A673 (cell line): ENCODE measurements at regions of chr6 and their contacts with region 1.

Region 1: DNA sequence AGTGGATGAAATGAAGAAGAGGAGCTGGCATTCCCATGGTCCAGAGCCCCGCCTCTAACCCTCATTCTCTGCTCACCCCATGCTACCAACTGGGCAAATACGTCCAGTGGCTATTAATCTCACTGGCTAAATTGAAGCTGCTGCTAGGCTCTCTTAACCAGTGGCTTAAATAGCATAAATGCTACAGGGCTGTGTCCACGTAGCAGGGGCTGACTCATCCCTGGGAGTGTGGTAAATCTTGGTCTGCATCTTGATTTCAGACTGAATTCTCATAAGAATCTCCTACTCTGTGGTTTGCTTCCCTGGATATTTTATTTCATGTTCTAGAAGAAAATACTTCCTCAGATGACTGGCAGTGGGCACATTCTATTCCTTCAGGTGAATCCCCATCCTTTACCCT is 193.1 kb upstream of the ARG1 start:
- DNase-seq: no peak
- H3K4me3 ChIP-seq: no peak overlapping the region
- H3K27ac ChIP-seq: peak overlapping the region; percentile 100
- H3K4me1 ChIP-seq: peaks cover 65% of the 10 kb centered on the region
- H3K27me3 ChIP-seq: no peaks in the 10 kb centered on the region
- CTCF ChIP-seq: no peak

Region 2: GRCh38 chr6:130885392-130886192 is 494.4 kb before region 1 on chr6:
- CTCF ChIA-PET with region 1: no interaction called
- POLR2A ChIA-PET with region 1: no interaction called
- intact Hi-C with region 1: loop called (anchors 5 kb)
- DNase-seq: peak; percentile 89
- H3K4me3 ChIP-seq: no peak overlapping the region
- H3K27ac ChIP-seq: no peak overlapping the region
- H3K4me1 ChIP-seq: peaks cover 4% of the 10 kb centered on the region
- H3K27me3 ChIP-seq: no peaks in the 10 kb centered on the region
- CTCF ChIP-seq: peak; percentile 89

Region 3: GRCh38 chr6:131063028-131063763 is 316.8 kb before region 1 on chr6 and contains the start of gene EPB41L2:
- CTCF ChIA-PET with region 1: no interaction called
- POLR2A ChIA-PET with region 1: interaction called, 11 read pairs
- intact Hi-C with region 1: no loop called
- DNase-seq: peak; percentile 96
- H3K4me3 ChIP-seq: peak within 1 kb of the TSS; percentile 93
- H3K27ac ChIP-seq: peak within 1 kb of the TSS; percentile 82
- H3K4me1 ChIP-seq: peaks cover 16% of the 10 kb centered on the region
- H3K27me3 ChIP-seq: no peaks in the 10 kb centered on the region
- CTCF ChIP-seq: no peak
- total RNA-seq, gene EPB41L2: 181 and 232 TPM in 2 replicates

Region 4: GRCh38 chr6:131199568-131200272 is 180.2 kb before region 1 on chr6:
- CTCF ChIA-PET with region 1: interaction called, 3 read pairs
- POLR2A ChIA-PET with region 1: no interaction called
- intact Hi-C with region 1: loop called (anchors 2 kb)
- DNase-seq: peak; percentile 90
- H3K4me3 ChIP-seq: no peak overlapping the region
- H3K27ac ChIP-seq: peak overlapping the region; percentile 55
- H3K4me1 ChIP-seq: peaks cover 26% of the 10 kb centered on the region
- H3K27me3 ChIP-seq: no peaks in the 10 kb centered on the region
- CTCF ChIP-seq: peak; percentile 90

Region 5: DNA sequence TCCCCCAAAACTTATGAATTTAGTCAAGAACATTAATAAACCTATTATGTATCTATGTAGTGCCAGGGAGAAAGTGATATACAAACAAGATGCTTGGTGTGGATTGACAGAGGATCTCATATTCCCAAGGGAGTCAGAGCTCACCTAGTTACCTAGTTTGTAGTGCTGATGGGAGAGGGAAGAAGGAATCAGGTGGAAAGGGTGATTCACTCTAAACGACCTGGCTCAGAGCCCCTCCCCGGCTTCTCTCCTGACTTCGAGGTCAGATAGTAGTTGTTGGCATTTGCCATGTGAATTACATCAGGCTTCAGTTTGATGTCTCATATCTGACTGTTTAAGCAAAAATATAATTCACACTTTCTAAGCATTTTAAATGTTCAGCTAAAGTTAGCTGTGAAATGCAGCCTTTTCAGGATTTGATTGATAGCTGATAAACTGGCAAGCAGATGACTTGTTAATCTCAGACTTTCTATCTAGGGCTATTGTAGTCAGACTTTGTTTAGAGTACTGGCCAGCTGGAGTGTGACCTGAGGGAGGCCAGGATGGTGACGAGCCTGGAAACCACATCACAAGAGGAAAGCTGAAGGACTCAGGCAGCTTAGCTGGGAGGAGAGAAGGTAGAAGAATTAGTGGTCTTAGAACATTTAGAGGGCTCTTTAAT is 121.0 kb before region 1 on chr6:
- CTCF ChIA-PET with region 1: no interaction called
- POLR2A ChIA-PET with region 1: no interaction called
- intact Hi-C with region 1: loop called (anchors 5 kb)
- DNase-seq: no peak
- H3K4me3 ChIP-seq: no peak overlapping the region
- H3K27ac ChIP-seq: peak overlapping the region; percentile 14
- H3K4me1 ChIP-seq: peaks cover 48% of the 10 kb centered on the region
- H3K27me3 ChIP-seq: no peaks in the 10 kb centered on the region
- CTCF ChIP-seq: no peak

Region 6: DNA sequence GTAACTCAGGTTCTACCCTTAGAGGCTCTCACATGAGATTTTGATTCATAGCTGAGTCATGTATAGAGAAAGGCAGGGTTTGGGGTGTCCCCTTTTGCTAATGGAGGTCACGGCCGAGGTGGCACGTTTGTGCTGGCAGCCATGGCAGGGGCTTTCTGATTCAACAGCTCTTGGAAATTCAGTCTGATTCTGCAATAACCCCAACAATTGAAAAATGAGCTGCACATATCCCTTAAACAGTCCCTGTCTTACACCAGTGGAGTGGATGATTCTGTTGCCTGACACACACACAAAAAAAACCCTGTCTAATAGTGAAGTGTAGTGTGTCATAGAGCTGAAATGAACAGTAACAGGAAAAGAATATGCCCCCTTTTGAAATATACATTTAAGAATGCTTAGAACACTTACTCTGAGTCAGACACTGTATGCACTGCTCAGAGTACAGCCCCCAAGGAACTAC is 152.7 kb after region 1 on chr6:
- CTCF ChIA-PET with region 1: interaction called, 11 read pairs
- POLR2A ChIA-PET with region 1: interaction called, 15 read pairs
- intact Hi-C with region 1: loop called (anchors 1 kb)
- DNase-seq: peak; percentile 12
- H3K4me3 ChIP-seq: no peak overlapping the region
- H3K27ac ChIP-seq: peak overlapping the region; percentile 69
- H3K4me1 ChIP-seq: peaks cover 26% of the 10 kb centered on the region
- H3K27me3 ChIP-seq: no peaks in the 10 kb centered on the region
- CTCF ChIP-seq: no peak

Region 7: DNA sequence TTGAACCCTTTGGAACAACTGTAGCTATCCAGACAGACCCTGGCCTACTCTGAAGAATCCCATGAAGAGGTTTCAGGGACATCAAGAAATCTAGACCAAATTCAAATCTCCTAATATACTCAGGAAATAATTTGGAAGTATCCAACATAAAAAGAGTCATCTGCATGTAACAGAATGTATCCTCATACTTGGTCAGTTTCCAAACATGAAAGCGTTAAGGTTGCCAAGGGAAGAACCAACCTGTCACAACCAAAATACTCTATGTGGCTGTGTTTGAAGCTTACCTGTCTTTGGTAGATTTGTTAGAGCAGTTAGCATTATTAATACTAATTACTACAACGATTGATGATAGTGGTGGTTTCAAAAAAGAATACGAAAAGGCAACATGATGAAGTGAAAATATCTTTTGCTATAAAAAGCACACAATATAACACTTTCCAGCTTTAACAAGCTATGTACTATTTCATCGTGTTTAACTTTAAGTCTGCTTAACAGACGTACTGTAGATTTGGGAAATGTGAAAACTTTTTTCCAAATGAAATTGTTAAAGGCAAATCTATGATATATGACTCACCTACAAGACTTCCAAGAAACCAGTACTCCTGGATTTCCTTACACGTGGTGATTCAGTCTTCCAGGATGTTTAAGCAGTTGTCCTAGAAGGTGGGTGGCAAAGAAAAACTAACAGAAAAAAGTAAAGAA is 381.3 kb after region 1 on chr6:
- CTCF ChIA-PET with region 1: no interaction called
- POLR2A ChIA-PET with region 1: no interaction called
- intact Hi-C with region 1: loop called (anchors 5 kb)
- DNase-seq: peak; percentile 39
- H3K4me3 ChIP-seq: no peak overlapping the region
- H3K27ac ChIP-seq: peak overlapping the region; percentile 84
- H3K4me1 ChIP-seq: peaks cover 65% of the 10 kb centered on the region
- H3K27me3 ChIP-seq: no peaks in the 10 kb centered on the region
- CTCF ChIP-seq: no peak